ENCODE measurements at regions of chr7 and their contacts with region 1.

Region 1: GRCh38 chr7:107201795-107202450 is 33.1 kb downstream of the HBP1 start:
- DNase-seq: peak; percentile 36 to 74 (median 61)
- ATAC-seq: peak; percentile 81 to 85
- H3K4me3 ChIP-seq: no peak overlapping the region
- H3K27ac ChIP-seq: no peak overlapping the region
- H3K4me1 ChIP-seq: no peaks in the 10 kb centered on the region
- H3K27me3 ChIP-seq: no peaks in the 10 kb centered on the region

Region 2: GRCh38 chr7:107277331-107277730 is 75.4 kb after region 1 on chr7:
- intact Hi-C with region 1: loop called in 1 of 4 experiments (anchors 10 kb)
- DNase-seq: no peak
- ATAC-seq: no peak
- H3K4me3 ChIP-seq: no peak overlapping the region
- H3K27ac ChIP-seq: no peak overlapping the region
- H3K4me1 ChIP-seq: no peaks in the 10 kb centered on the region
- H3K27me3 ChIP-seq: no peaks in the 10 kb centered on the region

Region 3: DNA sequence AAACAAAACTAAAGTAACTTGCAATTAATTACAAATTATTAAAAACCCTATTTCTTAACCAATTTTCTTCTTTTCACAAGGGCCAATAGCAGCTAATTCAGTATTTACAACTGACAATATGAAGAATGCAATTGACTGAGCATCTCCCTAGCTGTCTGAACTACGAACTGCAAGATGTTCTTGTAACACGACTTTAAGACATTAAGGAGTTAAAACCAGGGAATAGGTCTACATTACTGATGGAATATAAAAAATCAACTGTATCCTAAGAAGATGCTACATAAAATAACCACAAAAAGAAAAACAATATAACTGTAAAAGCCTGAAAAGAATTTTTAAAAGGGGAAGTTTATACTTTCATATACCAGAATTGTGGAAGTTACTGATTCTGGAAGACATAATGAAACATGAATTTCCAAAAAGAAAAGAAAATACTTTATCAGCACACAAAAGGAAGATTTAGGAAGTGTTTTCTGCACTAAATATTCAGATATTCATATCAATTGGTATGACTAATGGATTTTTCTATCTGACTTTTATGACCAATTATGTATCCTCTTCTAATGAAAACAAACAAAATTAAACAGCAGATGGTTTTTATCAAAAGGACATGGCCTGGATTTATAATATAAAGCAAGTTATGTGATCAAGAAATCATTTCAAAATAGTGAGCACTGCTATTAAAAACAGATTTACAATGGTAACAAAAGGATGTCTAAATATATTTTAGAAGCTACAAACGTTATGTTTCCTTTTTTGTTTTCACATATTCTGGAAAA is 269.6 kb after region 1 on chr7:
- intact Hi-C with region 1: loop called in 1 of 4 experiments (anchors 10 kb)
- DNase-seq: no peak
- ATAC-seq: peak in 1 of 2 donors; percentile 43
- H3K4me3 ChIP-seq: peak overlapping the region; percentile 75
- H3K27ac ChIP-seq: no peak overlapping the region
- H3K4me1 ChIP-seq: no peaks in the 10 kb centered on the region
- H3K27me3 ChIP-seq: no peaks in the 10 kb centered on the region

Region 4: DNA sequence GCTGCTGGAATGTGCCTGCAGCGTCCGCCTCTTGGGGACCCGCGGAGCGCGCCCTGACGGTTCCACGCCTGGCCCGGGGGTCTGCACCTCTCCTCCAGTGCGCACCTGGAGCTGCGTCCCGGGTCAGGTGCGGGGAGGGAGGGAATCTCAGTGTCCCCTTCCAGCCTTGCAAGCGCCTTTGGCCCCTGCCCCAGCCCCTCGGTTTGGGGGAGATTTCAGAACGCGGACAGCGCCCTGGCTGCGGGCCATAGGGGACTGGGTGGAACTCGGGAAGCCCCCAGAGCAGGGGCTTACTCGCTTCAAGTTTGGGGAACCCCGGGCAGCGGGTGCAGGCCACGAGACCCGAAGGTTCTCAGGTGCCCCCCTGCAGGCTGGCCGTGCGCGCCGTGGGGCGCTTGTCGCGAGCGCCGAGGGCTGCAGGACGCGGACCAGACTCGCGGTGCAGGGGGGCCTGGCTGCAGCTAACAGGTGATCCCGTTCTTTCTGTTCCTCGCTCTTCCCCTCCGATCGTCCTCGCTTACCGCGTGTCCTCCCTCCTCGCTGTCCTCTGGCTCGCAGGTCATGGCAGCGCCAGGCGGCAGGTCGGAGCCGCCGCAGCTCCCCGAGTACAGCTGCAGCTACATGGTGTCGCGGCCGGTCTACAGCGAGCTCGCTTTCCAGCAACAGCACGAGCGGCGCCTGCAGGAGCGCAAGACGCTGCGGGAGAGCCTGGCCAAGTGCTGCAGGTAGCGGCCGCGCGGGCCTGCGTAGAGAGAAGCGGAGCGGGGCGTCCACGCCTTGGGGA is 459.4 kb after region 1 on chr7:
- intact Hi-C with region 1: no loop called
- DNase-seq: peak; percentile 40 to 82 (median 73)
- ATAC-seq: peak; percentile 81 to 85
- H3K4me3 ChIP-seq: peak overlapping the region; percentile 53
- H3K27ac ChIP-seq: no peak overlapping the region
- H3K4me1 ChIP-seq: no peaks in the 10 kb centered on the region
- H3K27me3 ChIP-seq: no peaks in the 10 kb centered on the region

Region 5: DNA sequence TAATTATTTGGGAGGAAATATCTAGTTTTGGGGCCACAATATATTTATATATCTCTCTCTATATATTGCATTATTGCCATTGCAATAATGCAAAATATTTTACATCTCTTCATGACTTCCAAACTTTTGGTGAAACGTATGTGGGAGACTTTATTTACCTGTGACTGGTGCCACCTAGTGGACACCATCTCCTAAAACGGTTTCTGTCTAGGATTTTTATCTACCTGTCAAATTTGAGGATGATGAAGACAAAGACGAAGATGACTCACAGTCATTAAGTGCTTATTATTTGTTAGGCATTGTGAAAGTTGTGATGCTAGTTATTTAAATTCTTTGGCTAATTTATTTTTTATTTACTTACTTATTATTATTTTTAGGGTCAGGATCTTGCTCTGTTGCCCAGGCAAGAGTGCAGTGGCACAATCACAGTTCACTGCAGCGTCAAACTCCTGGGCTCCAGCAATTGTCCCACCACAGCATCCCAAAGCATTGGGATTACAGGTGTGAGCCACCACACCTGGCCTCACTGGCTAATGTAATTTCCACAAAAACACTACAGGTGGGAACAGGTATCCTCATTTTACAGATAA is 523.3 kb after region 1 on chr7:
- intact Hi-C with region 1: loop called in 1 of 4 experiments (anchors 10 kb)
- DNase-seq: no peak
- ATAC-seq: no peak
- H3K4me3 ChIP-seq: no peak overlapping the region
- H3K27ac ChIP-seq: no peak overlapping the region
- H3K4me1 ChIP-seq: no peaks in the 10 kb centered on the region
- H3K27me3 ChIP-seq: no peaks in the 10 kb centered on the region

Measured in right cardiac atrium (tissue), 5 donors.